Left cardiac atrium (tissue), 4 donors: ENCODE measurements at regions of chr10 and their contacts with region 1.

Region 1: GRCh38 chr10:118241229-118242137 is 100.6 kb downstream of the FAM204A start:
- DNase-seq: peak; percentile 77
- ATAC-seq: peak; percentile 73

Region 2: GRCh38 chr10:117537436-117537903 is 704.0 kb before region 1 on chr10:
- intact Hi-C with region 1: loop called in 1 of 2 experiments (anchors 2 kb)
- DNase-seq: peak; percentile 41
- ATAC-seq: peak; percentile 61 to 69